ENCODE measurements at regions of chr2 and their contacts with region 1.

Region 1: GRCh38 chr2:134683561-134684112 is 35.2 kb downstream of the TMEM163 start:
- DNase-seq: peak; percentile 63 to 97
- H3K4me3 ChIP-seq: no peak overlapping the region
- H3K27ac ChIP-seq: peak overlapping the region; percentile 51
- H3K4me1 ChIP-seq: peaks cover 61% of the 10 kb centered on the region
- H3K27me3 ChIP-seq: no peaks in the 10 kb centered on the region
- CTCF ChIP-seq: no peak

Region 2: DNA sequence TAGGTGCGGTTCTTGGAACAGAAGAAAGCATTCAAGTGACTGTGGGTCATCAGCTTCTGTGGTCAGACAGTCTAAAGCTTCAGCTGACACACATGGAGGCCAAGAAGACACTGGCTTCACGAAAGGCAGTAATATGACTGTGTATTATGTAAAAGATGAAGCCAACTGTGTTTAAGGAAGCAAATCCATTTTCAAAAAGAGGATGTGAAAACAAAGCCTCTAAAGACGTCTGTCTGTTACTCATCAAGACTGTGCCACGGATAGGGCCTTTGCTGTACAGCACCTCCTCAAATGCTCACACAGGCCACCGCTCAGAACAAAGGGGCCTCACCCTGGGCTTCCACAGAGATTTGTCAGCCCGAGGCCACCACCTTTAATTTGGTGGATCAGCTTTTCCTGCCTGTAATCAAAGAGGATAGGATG is 56.3 kb after region 1 on chr2:
- CTCF ChIA-PET with region 1: no interaction called
- POLR2A ChIA-PET with region 1: no interaction called
- intact Hi-C with region 1: loop called (anchors 5 kb)
- DNase-seq: peak in 1 of 2 experiments; percentile 11
- H3K4me3 ChIP-seq: no peak overlapping the region
- H3K27ac ChIP-seq: no peak overlapping the region
- H3K4me1 ChIP-seq: peaks cover 31% of the 10 kb centered on the region
- H3K27me3 ChIP-seq: no peaks in the 10 kb centered on the region
- CTCF ChIP-seq: no peak

Region 3: GRCh38 chr2:134774786-134775641 is 91.4 kb after region 1 on chr2:
- CTCF ChIA-PET with region 1: no interaction called
- POLR2A ChIA-PET with region 1: no interaction called
- intact Hi-C with region 1: loop called (anchors 2 kb)
- DNase-seq: peak; percentile 63 to 70
- H3K4me3 ChIP-seq: no peak overlapping the region
- H3K27ac ChIP-seq: peak overlapping the region; percentile 85
- H3K4me1 ChIP-seq: peaks cover 62% of the 10 kb centered on the region
- H3K27me3 ChIP-seq: no peaks in the 10 kb centered on the region
- CTCF ChIP-seq: no peak

Region 4: DNA sequence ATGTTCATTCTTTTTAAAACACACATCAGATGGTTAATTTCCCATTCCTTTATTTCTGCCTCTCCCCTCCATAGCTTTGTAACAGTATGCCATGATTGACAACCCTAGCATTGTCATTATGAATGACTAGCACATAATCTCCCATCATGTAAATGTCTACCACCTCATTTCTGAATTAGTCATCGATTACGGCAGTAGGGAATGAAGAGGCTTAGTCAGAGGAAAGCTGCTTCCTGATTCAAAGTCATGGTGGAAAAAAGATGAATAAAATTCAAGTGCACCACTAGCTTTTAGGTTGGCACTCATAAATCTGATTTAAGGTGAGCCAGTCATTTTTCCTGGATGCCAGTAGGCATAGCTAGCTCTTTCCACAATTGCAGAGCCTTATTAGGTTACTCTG is 135.7 kb after region 1 on chr2:
- CTCF ChIA-PET with region 1: no interaction called
- POLR2A ChIA-PET with region 1: no interaction called
- intact Hi-C with region 1: loop called (anchors 2 kb)
- DNase-seq: peak in 1 of 2 experiments; percentile 79
- H3K4me3 ChIP-seq: no peak overlapping the region
- H3K27ac ChIP-seq: peak overlapping the region; percentile 85
- H3K4me1 ChIP-seq: peaks cover 28% of the 10 kb centered on the region
- H3K27me3 ChIP-seq: no peaks in the 10 kb centered on the region
- CTCF ChIP-seq: no peak

Region 5: GRCh38 chr2:134918526-134919340 is 235.1 kb after region 1 on chr2 and contains the start of gene CCNT2:
- CTCF ChIA-PET with region 1: no interaction called
- POLR2A ChIA-PET with region 1: no interaction called
- intact Hi-C with region 1: loop called (anchors 1 kb)
- DNase-seq: peak; percentile 95 to 99
- H3K4me3 ChIP-seq: peak within 1 kb of the TSS; percentile 91
- H3K27ac ChIP-seq: peak within 1 kb of the TSS; percentile 94
- H3K4me1 ChIP-seq: peaks cover 27% of the 10 kb centered on the region
- H3K27me3 ChIP-seq: no peaks in the 10 kb centered on the region
- CTCF ChIP-seq: no peak
- total RNA-seq, gene CCNT2: 19.1 and 26.2 TPM in 2 replicates

Region 6: DNA sequence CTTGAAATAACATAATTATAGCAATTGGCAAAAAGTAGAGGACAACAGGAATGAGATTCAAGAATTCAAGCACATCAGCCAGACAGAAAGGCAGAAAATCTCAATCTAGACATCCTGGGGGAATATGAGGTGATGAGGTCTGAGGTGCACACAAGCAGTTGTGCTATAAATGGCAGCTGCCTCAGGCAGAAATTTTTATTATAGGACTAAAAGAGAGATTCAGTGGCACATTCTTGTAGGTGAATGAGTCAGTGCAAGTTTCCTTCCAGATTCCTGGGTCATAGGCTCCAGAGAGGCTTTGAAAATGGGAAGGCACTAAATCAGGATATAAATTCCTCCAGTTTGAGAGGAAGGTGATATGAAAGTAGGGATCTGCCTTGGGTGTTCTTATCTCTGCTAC is 1954.6 kb after region 1 on chr2:
- CTCF ChIA-PET with region 1: no interaction called
- POLR2A ChIA-PET with region 1: no interaction called
- intact Hi-C with region 1: no loop called
- DNase-seq: no peak
- H3K4me3 ChIP-seq: no peak overlapping the region
- H3K27ac ChIP-seq: no peak overlapping the region
- H3K4me1 ChIP-seq: no peaks in the 10 kb centered on the region
- H3K27me3 ChIP-seq: no peaks in the 10 kb centered on the region
- CTCF ChIP-seq: no peak

Measured in PC-9 (cell line).